ENCODE measurements at regions of chr9 and their contacts with region 1.

Region 1: GRCh38 chr9:13427587-13427986 is 148.1 kb upstream of the MPDZ start:
- H3K4me3 ChIP-seq: no peak overlapping the region
- H3K27ac ChIP-seq: no peak overlapping the region
- H3K4me1 ChIP-seq: peaks cover 7% of the 10 kb centered on the region; the same call in 1 of the 2 replicates
- CTCF ChIP-seq: no peak

Region 2: DNA sequence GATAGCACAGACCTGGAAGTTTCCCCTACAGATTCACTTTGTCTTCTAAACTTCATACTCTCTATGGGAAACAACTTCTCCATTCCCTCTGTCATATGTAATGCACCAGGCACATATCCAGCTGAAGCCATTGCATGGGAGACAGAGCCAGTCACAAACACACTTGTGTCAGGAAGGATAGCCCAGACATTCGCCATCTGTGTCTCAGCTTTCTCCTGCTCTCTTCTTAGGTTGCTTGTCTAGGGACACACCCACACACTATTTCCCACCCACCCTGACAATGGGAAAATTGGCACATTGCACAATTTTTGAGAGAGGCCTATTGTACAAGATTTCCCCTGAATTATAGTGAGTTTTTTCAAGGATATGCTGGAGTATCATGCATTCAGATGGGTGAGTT is 10.3 kb after region 1 on chr9:
- CTCF ChIA-PET with region 1: interaction called, 33 read pairs
- POLR2A ChIA-PET with region 1: no interaction called
- H3K4me3 ChIP-seq: no peak overlapping the region
- H3K27ac ChIP-seq: no peak overlapping the region
- H3K4me1 ChIP-seq: no peaks in the 10 kb centered on the region
- CTCF ChIP-seq: no peak

Region 3: GRCh38 chr9:13552606-13553215 is 125.1 kb after region 1 on chr9:
- CTCF ChIA-PET with region 1: no interaction called
- POLR2A ChIA-PET with region 1: no interaction called
- H3K4me3 ChIP-seq: no peak overlapping the region
- H3K27ac ChIP-seq: no peak overlapping the region
- H3K4me1 ChIP-seq: no peaks in the 10 kb centered on the region; the same call in 1 of the 2 replicates
- CTCF ChIP-seq: no peak

Region 4: GRCh38 chr9:13688994-13689600 is 261.5 kb after region 1 on chr9:
- CTCF ChIA-PET with region 1: interaction called, 17 read pairs
- POLR2A ChIA-PET with region 1: no interaction called
- H3K4me3 ChIP-seq: no peak overlapping the region
- H3K27ac ChIP-seq: no peak overlapping the region
- H3K4me1 ChIP-seq: no peaks in the 10 kb centered on the region
- CTCF ChIP-seq: no peak

Region 5: GRCh38 chr9:14353222-14354056 is 925.9 kb after region 1 on chr9:
- CTCF ChIA-PET with region 1: interaction called, 38 read pairs
- POLR2A ChIA-PET with region 1: no interaction called
- H3K4me3 ChIP-seq: no peak overlapping the region
- H3K27ac ChIP-seq: peak overlapping the region; percentile 28; the same call in 1 of the 2 replicates
- H3K4me1 ChIP-seq: peaks cover 3% of the 10 kb centered on the region; the same call in 1 of the 2 replicates
- CTCF ChIP-seq: peak; percentile 81

Region 6: GRCh38 chr9:14400658-14400995 is 973.0 kb after region 1 on chr9:
- CTCF ChIA-PET with region 1: interaction called, 23 read pairs
- POLR2A ChIA-PET with region 1: no interaction called
- H3K4me3 ChIP-seq: no peak overlapping the region
- H3K27ac ChIP-seq: no peak overlapping the region
- H3K4me1 ChIP-seq: no peaks in the 10 kb centered on the region
- CTCF ChIP-seq: peak; percentile 48; the same call in 1 of the 2 replicates

Region 7: GRCh38 chr9:14428781-14429230 is 1001.2 kb after region 1 on chr9:
- CTCF ChIA-PET with region 1: interaction called, 23 read pairs
- POLR2A ChIA-PET with region 1: no interaction called
- H3K4me3 ChIP-seq: no peak overlapping the region
- H3K27ac ChIP-seq: no peak overlapping the region
- H3K4me1 ChIP-seq: no peaks in the 10 kb centered on the region
- CTCF ChIP-seq: 0 out of 2 replicates have a peak, but pooled peaks have one; percentile 17

Measured in HEK293 (cell line).